ENCODE measurements at regions of chr2 and their contacts with region 1.

Region 1: DNA sequence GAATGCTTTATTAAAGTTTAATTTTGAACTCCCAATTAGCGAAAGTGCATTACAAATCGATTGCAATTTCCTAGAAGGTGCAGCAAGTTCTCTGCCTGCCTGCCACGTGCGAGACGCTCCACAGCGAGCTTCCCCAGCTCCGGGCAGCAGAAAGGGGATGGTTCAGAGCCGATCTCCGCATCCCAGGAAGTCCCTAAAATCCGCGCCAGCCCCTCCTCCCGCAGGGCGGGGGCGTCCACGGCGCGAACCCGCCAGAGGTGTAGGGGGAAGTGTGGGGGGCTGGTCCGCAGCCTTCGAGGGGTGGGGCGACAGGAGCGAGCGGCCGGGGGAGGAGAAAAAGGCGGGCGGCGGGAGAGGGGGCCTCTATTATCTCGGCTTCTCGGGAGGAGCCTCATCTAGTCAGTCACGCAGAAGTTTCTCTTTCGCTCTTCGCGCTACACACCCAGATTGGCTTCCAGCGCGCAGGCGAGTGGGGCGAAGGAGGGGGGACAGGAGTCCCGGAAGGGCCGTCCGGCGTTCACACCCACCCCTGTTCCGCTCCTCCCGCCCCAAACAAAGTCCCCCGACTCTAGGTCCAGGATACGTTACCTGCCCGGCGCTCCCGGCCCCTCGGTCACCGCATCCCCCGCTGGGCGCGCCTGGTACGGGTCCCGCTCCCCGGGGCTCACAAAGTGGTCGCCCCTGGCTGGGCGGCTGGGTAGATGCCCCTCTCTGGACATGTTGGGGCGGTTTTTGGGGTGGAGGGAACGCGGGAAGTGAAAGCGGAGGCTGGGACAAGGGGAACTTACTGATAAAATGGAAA is 9.1 kb upstream of the NR4A2 start:
- DNase-seq: peak; percentile 61 to 92 (median 80)

Region 2: DNA sequence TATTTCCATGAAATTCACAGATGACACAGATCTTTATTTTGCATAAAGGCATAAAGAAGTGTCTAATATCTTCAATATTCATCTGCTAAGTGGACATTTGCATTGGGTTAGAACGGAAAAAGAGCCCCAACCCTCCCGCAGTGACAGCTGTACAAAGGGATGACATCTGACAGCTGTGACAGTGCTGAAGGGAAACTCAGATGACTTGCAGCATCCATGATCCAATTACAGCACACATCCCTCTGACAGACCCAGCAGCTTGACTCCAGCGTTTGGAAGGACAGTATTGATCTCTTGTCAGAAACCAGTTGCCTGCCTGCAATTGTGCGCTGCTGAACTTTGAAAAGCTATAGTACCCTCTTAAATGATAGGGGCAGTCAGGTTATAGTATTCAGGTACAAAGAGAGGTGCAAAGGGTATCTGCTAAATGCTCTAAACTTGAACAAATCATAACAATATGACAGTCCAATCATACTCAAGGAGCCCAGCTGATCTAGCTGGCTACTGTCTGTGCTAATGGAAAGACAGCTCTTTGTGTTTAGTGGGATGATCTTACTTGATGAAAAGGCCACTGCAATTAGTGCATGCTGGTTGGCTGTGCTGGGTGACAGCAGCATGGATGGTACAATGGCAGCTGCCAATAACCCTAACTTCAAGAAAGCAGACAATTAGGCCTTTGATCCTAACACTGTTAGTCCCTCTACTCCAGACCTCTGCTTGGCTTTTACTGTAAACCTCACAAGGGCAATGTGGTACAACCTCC is 608.4 kb before region 1 on chr2:
- intact Hi-C with region 1: loop called (anchors 5 kb)
- DNase-seq: peak; percentile 3 to 87 (median 67)

Region 3: GRCh38 chr2:156253765-156254164 is 87.9 kb before region 1 on chr2:
- intact Hi-C with region 1: no loop called
- DNase-seq: no peak

Region 4: DNA sequence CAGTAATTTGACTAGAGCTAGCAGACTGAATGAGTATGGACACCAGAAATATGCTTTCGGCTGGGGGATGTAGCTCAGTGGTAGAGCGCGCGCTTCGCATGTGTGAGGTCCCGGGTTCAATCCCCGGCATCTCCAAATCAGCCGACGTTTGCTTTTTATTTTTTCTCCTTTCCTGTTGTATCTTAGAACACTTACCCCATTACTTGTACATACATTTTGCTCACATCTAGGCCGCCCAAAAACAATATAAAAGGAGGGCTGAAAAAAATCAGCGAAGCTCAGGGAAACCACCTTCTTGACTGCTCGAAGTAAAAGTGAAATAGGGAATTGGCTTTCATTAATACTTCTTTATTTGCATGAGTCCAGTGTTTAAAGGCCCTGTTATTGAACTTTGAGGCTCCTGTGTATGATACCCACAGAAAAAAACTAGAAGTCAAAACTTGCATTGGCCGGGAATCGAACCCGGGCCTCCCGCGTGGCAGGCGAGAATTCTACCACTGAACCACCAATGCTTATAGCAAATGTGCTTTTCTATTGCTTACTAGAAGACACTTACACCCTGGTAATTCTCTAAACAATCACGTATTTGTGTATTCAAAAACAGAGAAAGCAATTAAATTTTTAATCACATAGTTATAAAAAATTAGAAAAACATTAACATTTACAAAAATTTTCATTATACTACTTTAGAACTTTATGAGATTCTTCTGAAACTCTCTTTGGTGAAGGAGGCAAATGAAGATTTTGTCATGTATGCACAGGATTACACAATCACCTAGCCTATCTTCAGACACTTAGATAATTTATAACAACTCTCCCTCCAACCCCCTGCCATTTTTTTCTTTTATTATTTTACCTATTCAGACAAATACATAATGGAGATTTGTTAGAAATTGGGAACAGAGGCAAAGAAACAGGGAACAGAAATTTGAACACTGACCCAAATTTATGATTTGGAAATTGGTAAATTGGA is 59.3 kb after region 1 on chr2:
- intact Hi-C with region 1: loop called (anchors 2 kb)
- DNase-seq: peak; percentile 56 to 94 (median 80)

Region 5: DNA sequence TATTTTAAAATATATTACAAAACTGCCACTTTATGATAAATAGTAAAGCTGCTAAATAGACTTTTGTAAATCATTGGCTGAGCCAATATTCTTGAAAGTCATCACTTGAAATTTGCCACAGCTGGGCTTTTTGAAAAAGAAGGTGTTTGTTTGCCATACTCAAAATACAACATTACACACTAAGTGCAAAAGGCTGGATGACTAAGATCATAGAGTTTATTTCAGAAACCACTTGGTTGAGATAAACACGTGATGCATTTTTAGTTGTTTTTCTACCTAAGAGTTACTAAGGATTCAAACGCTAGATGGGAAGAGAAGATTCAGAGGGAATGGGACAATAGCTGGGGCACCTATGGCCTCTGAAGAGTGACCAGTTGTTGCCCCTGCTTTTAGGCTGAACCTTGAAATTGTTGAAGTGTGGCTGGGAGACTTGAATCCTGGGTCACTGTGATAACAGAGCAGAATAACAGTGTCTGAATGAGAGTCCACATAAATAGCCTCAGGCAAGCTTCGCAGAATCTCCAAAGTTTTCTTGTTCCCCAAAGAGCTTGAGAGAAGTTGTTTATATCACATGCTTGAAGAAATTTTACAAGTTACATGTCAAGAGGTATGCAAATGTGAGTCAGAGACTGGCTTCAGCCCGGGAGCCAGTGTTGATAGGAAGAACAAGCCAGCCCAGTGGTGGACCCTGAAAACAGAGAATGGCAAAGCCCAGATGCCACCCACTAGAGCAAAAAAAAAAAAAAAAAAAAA is 504.3 kb after region 1 on chr2:
- intact Hi-C with region 1: no loop called
- DNase-seq: no peak

Region 6: GRCh38 chr2:158179660-158180059 is 1838.0 kb after region 1 on chr2:
- intact Hi-C with region 1: no loop called
- DNase-seq: no peak

Measured in head of caudate nucleus (tissue), 42 donors.